Activated CD4-positive, alpha-beta T cell treated with anti-CD3 and anti-CD28 coated beads, Interleukin-2, amount 10 ng/mL, durations not matched to agents 24 days and 14 days (primary cell): ENCODE measurements at regions of chr20 and their contacts with region 1.

Region 1: GRCh38 chr20:21395666-21396598 is 1.4 kb downstream of the NKX2-4 start:
- DNase-seq: peak; percentile 84
- H3K4me3 Mint-ChIP-seq: peak overlapping the region; percentile 71
- H3K27ac Mint-ChIP-seq: peak overlapping the region; percentile 46
- H3K4me1 Mint-ChIP-seq: peaks cover 23% of the 10 kb centered on the region
- H3K27me3 Mint-ChIP-seq: peaks cover 72% of the 10 kb centered on the region

Region 2: GRCh38 chr20:21105429-21106170 is 290.3 kb before region 1 on chr20:
- intact Hi-C with region 1: loop called (anchors 2 kb)
- DNase-seq: peak; percentile 66
- H3K4me3 Mint-ChIP-seq: peak overlapping the region; percentile 40
- H3K27ac Mint-ChIP-seq: no peak overlapping the region
- H3K4me1 Mint-ChIP-seq: peaks cover 25% of the 10 kb centered on the region
- H3K27me3 Mint-ChIP-seq: peaks cover 78% of the 10 kb centered on the region

Region 3: GRCh38 chr20:21505161-21505809 is 109.4 kb after region 1 on chr20:
- intact Hi-C with region 1: loop called (anchors 2 kb)
- DNase-seq: peak; percentile 93
- H3K4me3 Mint-ChIP-seq: peak overlapping the region; percentile 63
- H3K27ac Mint-ChIP-seq: peak overlapping the region; percentile 51
- H3K4me1 Mint-ChIP-seq: peaks cover 18% of the 10 kb centered on the region
- H3K27me3 Mint-ChIP-seq: peaks cover 47% of the 10 kb centered on the region

Region 4: GRCh38 chr20:21571841-21572690 is 176.1 kb after region 1 on chr20:
- intact Hi-C with region 1: loop called (anchors 5 kb)
- DNase-seq: peak; percentile 72
- H3K4me3 Mint-ChIP-seq: no peak overlapping the region
- H3K27ac Mint-ChIP-seq: no peak overlapping the region
- H3K4me1 Mint-ChIP-seq: peaks cover 4% of the 10 kb centered on the region
- H3K27me3 Mint-ChIP-seq: peaks cover 23% of the 10 kb centered on the region

Region 5: DNA sequence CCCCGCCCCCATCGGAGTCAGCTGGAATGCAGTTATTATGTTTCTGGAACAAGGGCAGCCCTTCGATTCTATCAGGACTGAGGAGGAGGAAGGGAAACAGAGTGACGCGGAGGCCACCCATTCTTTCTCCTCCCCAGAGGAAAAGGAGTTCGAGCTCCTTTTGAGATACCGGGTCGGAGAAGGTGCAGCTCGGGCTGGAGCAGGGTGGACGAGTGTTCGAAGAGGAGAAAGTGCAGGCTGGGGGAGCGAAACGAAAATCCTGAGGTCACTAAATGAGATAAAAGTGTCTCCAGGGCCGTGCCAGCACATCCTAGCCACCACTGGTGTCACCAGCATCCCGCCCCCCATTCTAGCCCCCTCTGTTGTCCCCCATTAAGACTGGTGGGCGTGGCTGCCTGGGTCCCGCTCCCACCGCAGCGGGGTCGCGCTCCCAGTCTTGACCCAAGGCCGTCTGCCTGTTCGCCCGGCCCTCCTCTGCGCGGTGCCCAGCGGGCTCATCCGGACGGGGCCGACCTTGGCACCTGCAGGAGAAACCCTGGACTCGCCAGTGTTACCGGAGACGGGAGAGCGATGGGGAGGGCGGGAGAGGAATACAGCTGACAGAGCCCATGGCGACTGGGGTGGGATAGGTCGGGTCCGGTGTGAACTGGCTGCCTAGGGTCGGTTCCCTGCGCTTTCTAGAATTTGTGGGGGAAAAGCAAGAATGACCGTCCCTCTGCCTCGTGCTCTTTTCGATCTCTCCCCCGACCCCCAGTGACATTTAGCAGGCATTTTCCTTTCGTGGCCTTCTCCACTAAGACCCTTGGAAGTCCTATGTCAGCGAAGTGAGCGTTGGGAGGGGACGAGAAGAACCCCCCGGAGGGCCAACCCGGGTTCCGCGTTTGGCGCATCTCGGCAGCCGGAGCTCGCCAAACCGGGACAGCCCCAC is 1172.3 kb after region 1 on chr20:
- intact Hi-C with region 1: loop called (anchors 10 kb)
- DNase-seq: no peak
- H3K4me3 Mint-ChIP-seq: no peak overlapping the region
- H3K27ac Mint-ChIP-seq: no peak overlapping the region
- H3K4me1 Mint-ChIP-seq: no peaks in the 10 kb centered on the region
- H3K27me3 Mint-ChIP-seq: peaks cover 75% of the 10 kb centered on the region